ENCODE measurements at regions of chr17 and their contacts with region 1.

Region 1: GRCh38 chr17:36629252-36629847 is 28.0 kb downstream of the MRM1 start:
- DNase-seq: peak; percentile 86
- ATAC-seq: peak; percentile 88
- H3K4me3 Mint-ChIP-seq: no peak overlapping the region
- H3K27ac Mint-ChIP-seq: no peak overlapping the region
- H3K4me1 Mint-ChIP-seq: no peaks in the 10 kb centered on the region
- H3K27me3 Mint-ChIP-seq: peaks cover 9% of the 10 kb centered on the region

Region 2: DNA sequence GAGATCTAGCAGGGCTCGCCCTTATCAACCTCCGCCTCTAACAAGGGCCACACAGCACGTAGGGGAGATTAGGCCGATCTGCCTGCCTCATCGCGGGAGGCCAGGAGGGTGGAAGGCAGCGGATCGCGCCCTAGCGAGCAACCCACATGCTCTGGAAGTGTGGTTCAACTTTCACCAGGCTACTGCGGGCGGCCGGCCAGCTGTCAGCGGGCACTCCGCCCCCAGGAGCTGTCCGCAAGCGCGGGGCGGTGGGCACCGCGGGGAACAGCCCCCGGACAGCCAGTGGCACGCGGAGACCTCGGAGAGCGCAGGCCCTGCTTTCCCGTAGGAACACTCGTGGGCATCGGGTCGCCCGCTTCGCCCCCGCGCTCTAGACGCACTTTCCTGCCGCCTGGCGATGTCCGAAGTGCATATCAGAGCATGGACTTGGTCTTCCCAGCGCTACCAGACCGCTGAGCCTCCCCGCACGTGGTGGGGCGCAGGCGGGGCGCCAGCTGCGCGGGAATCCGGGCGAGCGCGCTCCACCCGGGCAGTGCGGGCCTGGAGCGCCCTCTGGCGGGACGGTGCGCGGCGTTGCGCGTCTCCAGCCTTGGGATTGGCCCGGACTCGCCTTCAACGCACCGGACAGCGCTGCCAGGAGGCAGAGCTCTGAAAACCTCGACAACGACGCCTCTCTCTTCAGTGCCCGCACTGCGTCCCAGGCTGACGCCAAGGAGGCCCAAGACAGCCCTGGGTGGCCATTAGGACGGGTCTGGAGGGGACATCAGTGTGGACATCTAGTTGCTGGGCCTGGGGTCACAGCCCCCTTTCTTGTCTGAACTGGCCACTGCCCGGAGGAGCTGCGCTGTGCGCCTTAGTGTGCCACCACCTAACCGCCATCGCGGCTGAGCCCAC is 146.5 kb before region 1 on chr17:
- CTCF ChIA-PET with region 1: no interaction called
- DNase-seq: peak; percentile 87
- ATAC-seq: peak; percentile 74
- H3K4me3 Mint-ChIP-seq: no peak overlapping the region
- H3K27ac Mint-ChIP-seq: no peak overlapping the region
- H3K4me1 Mint-ChIP-seq: peaks cover 28% of the 10 kb centered on the region
- H3K27me3 Mint-ChIP-seq: peaks cover 27% of the 10 kb centered on the region

Region 3: DNA sequence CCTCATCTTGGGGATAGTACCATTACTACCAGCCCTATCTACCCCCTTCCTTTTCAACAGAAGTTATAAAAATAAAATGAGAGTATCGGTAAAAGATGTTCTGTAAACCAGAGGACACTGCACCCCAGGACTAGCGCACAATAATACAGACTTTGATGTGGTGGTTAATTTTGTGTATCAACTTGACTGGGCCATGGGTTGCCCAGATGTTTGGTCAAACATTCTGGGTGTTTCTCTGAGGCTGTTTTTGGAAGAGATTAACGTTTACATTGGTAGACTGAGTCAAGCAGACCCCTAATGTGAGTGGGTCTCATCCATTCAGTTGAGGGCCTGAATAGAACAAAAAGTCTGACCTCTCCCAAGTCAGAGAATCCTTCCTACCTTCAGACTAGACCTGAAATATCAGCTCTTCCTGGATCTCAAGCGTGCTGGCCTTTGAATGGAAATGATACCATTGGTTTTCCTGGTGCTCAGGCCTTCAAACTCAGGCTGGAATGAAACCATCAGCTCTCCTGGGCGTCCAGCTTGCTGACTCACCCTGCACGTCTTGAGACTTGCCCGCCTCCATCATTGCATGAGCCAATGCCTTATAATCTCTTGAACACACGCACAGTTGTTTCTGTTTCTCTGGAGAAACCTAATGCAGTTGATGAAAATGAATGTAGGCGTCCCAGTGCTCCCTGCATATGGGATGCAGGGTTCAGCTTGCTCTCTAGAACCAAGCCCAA is 17.8 kb before region 1 on chr17:
- CTCF ChIA-PET with region 1: interaction called, 20 read pairs
- DNase-seq: no peak
- ATAC-seq: no peak
- H3K4me3 Mint-ChIP-seq: no peak overlapping the region
- H3K27ac Mint-ChIP-seq: no peak overlapping the region
- H3K4me1 Mint-ChIP-seq: peaks cover 3% of the 10 kb centered on the region
- H3K27me3 Mint-ChIP-seq: no peaks in the 10 kb centered on the region

Region 4: GRCh38 chr17:36686111-36686669 is 56.8 kb after region 1 on chr17:
- CTCF ChIA-PET with region 1: no interaction called
- DNase-seq: no peak
- ATAC-seq: no peak
- H3K4me3 Mint-ChIP-seq: no peak overlapping the region
- H3K27ac Mint-ChIP-seq: no peak overlapping the region
- H3K4me1 Mint-ChIP-seq: no peaks in the 10 kb centered on the region
- H3K27me3 Mint-ChIP-seq: peaks cover 21% of the 10 kb centered on the region

Region 5: DNA sequence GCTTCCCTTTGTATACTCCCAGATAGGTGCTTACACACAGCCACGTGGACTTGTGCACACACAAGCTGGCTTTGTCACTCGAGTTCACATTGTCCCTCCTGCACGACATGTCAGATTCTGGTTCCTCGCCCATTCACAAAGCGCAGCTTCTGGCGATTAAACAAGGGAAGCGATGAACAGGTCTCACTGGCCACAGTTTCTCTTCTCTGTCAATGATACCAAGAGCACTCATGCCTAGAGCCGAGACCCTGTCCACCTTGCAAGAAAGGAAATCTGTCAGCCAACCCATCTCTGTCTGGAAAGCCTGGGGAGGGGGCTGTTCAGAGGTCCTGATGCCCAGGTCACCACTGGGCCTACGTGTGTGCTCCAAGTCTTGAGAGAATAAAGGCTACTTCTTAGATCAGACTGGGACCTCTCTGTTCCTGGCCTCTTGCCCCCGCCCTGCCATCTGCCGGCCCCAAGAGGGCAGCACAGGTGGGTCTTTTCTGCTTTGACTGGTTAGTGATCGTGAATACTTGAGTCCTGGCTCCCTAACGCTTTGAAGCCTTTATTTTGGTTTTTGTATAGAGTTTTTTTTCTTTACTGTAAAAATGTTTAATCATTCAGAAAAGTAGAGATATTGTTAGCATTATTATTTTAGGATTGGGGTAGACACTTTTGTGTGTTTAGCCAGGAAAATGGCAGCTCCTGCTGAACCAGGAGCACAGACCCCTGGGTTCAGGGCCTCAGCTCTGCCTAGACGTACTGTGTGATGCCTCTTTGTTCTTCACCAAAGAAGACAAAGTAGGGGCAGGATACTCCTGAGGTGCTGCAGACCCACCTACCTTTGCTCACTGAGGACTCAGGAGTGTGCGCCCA is 76.8 kb after region 1 on chr17:
- CTCF ChIA-PET with region 1: interaction called, 56 read pairs
- DNase-seq: peak; percentile 73
- ATAC-seq: peak; percentile 86
- H3K4me3 Mint-ChIP-seq: no peak overlapping the region
- H3K27ac Mint-ChIP-seq: no peak overlapping the region
- H3K4me1 Mint-ChIP-seq: no peaks in the 10 kb centered on the region
- H3K27me3 Mint-ChIP-seq: peaks cover 41% of the 10 kb centered on the region

Region 6: DNA sequence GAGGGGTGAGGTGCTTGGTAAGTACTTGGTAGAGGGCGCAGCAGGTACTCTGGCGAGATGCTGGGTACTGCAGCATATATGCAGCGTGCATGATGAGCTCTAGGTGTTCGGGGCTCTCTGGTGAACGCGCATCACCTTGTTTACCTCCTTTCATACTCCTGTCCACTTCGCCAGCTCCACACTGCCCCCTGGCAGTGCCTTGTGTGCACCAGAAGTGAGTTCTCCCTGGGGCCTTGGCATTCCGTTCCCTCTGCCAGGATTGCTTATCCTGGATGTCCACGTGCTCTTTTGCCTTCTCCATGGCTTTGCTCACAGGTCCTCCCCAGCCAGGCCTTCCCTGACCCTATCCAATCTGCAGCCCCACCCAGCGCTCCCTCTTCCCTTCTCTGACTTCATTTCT is 126.2 kb after region 1 on chr17:
- CTCF ChIA-PET with region 1: interaction called, 19 read pairs
- DNase-seq: peak; percentile 62
- ATAC-seq: peak; percentile 55
- H3K4me3 Mint-ChIP-seq: no peak overlapping the region
- H3K27ac Mint-ChIP-seq: no peak overlapping the region
- H3K4me1 Mint-ChIP-seq: no peaks in the 10 kb centered on the region
- H3K27me3 Mint-ChIP-seq: peaks cover 3% of the 10 kb centered on the region

Region 7: DNA sequence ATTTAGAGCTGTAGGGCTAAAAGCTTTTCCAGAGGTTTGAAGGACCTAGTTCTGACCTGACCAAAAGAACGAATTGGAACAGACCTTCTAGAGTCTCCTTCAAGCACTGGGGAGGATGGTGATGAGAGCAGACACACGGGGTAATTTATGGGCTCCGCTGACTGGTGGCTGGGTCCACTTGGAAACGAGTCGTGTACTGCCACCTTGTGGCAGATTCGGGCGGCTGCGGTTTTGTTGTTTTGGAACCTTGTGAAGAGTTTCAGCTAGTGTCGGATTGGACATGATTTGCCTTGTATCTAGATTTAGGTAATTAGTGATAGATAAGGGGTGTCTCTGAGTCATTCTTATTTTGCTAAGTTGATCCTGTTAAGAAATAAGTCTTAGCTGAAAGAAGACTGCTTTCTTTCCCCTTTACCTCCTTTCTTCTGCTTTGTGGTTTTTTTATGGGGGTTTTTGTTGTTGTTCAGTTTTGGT is 418.3 kb after region 1 on chr17:
- CTCF ChIA-PET with region 1: interaction called, 24 read pairs
- DNase-seq: peak; percentile 90
- ATAC-seq: peak; percentile 83
- H3K4me3 Mint-ChIP-seq: no peak overlapping the region
- H3K27ac Mint-ChIP-seq: peak overlapping the region; percentile 66
- H3K4me1 Mint-ChIP-seq: peaks cover 12% of the 10 kb centered on the region
- H3K27me3 Mint-ChIP-seq: no peaks in the 10 kb centered on the region

Region 8: GRCh38 chr17:37239690-37240334 is 610.5 kb after region 1 on chr17:
- CTCF ChIA-PET with region 1: interaction called, 34 read pairs
- DNase-seq: no peak
- ATAC-seq: no peak
- H3K4me3 Mint-ChIP-seq: no peak overlapping the region
- H3K27ac Mint-ChIP-seq: no peak overlapping the region
- H3K4me1 Mint-ChIP-seq: no peaks in the 10 kb centered on the region
- H3K27me3 Mint-ChIP-seq: no peaks in the 10 kb centered on the region

Measured in activated CD8-positive, alpha-beta memory T cell treated with anti-CD3 and anti-CD28 coated beads, Interleukin-2, amount 10 ng/mL, durations not matched to agents 7 days and 5 days (primary cell).